ENCODE measurements at regions of chr10 and their contacts with region 1.

Region 1: DNA sequence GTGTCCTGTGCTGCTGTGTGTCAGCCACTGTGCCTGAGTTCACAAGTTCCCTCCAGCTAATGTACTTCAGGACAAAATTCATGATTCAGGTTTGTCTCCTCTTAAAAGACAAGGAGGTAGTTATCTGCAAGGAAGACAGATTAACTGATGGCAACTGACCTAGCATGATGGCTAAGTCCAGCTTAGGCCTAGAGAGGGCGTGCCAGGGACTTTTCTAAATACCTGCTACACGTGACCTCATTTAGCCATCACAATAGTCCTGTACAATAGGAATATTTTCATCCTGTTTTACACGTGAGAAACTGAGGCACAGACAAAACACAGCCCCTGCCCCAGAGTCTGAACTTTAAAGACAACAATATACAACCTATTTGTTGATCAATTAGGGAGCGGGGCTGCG is 275.7 kb downstream of the XPNPEP1 start:
- DNase-seq: peak; percentile 46
- H3K4me3 ChIP-seq: no peak overlapping the region
- H3K27ac ChIP-seq: no peak overlapping the region
- H3K4me1 ChIP-seq: no peaks in the 10 kb centered on the region
- H3K27me3 ChIP-seq: no peaks in the 10 kb centered on the region
- CTCF ChIP-seq: no peak

Region 2: GRCh38 chr10:109773288-109774120 is 125.9 kb after region 1 on chr10:
- intact Hi-C with region 1: loop called (anchors 5 kb)
- DNase-seq: no peak
- H3K4me3 ChIP-seq: no peak overlapping the region
- H3K27ac ChIP-seq: no peak overlapping the region
- H3K4me1 ChIP-seq: no peaks in the 10 kb centered on the region
- H3K27me3 ChIP-seq: no peaks in the 10 kb centered on the region
- CTCF ChIP-seq: peak; percentile 43